Naive thymus-derived CD4-positive, alpha-beta T cell (primary cell): ENCODE measurements at regions of chr16 and their contacts with region 1.

Region 1: GRCh38 chr16:8868416-8869211 is at the start of gene CARHSP1:
- DNase-seq: peak; percentile 65 to 87 (median 74)
- ATAC-seq: peak; percentile 91
- H3K4me3 ChIP-seq: peak within 1 kb of the TSS; percentile 74
- H3K4me3 Mint-ChIP-seq: peak within 1 kb of the TSS; percentile 93 to 98 (median 96)
- H3K27ac ChIP-seq: peak within 1 kb of the TSS; percentile 67
- H3K27ac Mint-ChIP-seq: peak within 1 kb of the TSS; percentile 88 to 98 (median 95)
- H3K4me1 ChIP-seq: peaks cover 6 to 12% of the 10 kb centered on the region in 2 donors
- H3K4me1 Mint-ChIP-seq: peaks cover 30 to 63% (median 51%) of the 10 kb centered on the region in 7 donors
- H3K27me3 ChIP-seq: no peaks in the 10 kb centered on the region
- H3K27me3 Mint-ChIP-seq: no peaks in the 10 kb centered on the region
- total RNA-seq, gene CARHSP1: 29.6 to 123 (median 39.9) TPM

Region 2: DNA sequence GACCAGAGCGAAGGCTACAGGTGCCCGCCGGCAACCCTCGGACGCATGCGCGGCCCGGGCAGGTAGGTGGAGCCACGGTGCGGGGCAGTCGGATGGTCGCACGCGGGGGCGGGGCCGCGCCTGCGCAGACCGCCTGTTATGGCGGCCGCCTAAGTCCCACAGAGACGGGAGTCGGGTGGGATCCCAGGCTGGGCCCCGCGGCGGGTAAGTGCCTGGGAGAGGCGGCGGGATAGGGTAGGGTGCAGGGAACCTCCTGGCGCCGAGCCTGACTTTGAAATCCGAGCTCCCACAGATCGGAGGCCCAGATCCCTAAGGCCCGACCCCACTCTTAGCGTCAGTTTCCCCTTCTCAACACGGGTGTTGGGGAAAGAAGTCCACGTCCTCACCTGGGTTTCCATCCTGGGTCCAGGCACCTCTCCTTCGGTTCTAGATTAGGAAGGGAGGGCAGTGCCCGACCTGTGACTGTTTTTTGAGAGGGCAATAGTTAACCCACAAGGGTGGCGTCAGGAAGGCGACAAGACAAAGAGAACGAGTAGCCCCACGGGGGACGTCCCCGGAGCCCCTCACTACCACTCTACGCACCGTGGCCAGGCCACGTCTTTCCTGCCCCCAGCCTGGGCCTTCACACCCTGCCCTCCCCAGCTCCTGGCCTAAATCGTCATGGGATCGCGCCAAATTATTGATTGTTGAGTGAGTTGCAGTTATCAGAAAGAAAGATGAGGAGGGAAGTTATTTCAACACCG is 246.9 kb before region 1 on chr16 and contains the start of gene METTL22:
- CTCF ChIA-PET with region 1: no interaction called
- POLR2A ChIA-PET with region 1: no interaction called
- intact Hi-C with region 1: loop called (anchors 1 to 2 kb)
- DNase-seq: peak; percentile 83 to 98 (median 90)
- ATAC-seq: peak; percentile 99
- H3K4me3 ChIP-seq: peak within 1 kb of the TSS; percentile 97
- H3K4me3 Mint-ChIP-seq: peak within 1 kb of the TSS; percentile 93 to 100 (median 95)
- H3K27ac ChIP-seq: peak within 1 kb of the TSS; percentile 92
- H3K27ac Mint-ChIP-seq: peak within 1 kb of the TSS; percentile 75 to 93 (median 87)
- H3K4me1 ChIP-seq: peaks cover 7 to 10% of the 10 kb centered on the region in 2 donors
- H3K4me1 Mint-ChIP-seq: peaks cover 17 to 40% (median 26%) of the 10 kb centered on the region in 7 donors
- H3K27me3 ChIP-seq: no peaks in the 10 kb centered on the region
- H3K27me3 Mint-ChIP-seq: peaks cover 0 to 17% (median 6%) of the 10 kb centered on the region in 5 donors
- total RNA-seq, gene METTL22: 28.9 to 59.4 (median 48.9) TPM

Region 3: DNA sequence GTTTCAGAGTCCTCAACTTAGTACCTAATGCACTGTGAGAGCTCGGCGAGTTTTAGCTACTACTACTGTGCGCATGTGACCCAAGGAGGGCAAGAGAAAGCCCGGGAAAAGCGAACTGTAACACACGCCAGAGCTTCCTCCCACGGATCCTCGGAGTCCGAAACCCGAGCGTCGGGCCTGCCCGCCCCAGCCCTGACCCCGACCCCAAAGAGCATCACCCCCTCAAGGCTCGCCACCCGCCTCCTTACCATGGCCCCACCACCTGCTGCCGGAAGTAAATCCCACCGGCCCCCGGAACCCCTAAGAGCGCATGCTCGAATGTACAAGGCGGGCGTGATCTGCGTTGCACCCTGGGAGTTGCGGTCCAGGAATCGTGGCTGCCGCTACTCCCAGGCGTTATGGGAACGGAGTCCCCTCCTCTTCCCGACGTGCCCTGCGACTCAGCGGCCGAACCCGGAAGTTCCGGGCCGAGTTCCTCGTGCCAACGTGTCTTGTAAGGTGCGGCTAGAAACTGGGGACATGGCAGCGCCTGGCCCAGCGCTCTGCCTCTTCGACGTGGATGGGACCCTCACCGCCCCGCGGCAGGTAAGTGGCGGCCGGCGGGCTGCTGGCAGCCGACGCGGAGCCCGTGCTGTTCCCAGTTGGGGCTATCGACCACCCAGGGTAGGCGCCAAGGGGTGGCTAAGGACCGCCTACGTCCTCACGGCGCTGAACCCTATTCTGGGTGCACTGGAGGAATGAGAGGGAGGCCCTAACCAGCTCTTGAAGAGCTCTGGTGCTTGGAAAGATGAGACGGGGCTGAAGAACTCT is 71.0 kb before region 1 on chr16 and contains the starts of genes PMM2 and TMEM186:
- CTCF ChIA-PET with region 1: interaction called, 4 read pairs
- POLR2A ChIA-PET with region 1: interaction called, 22 read pairs
- intact Hi-C with region 1: loop called (anchors 1 kb)
- DNase-seq: peak; percentile 78 to 96 (median 93)
- ATAC-seq: peak; percentile 99
- H3K4me3 ChIP-seq: peak within 1 kb of the TSS; percentile 90
- H3K4me3 Mint-ChIP-seq: peak within 1 kb of the TSS; percentile 91 to 99 (median 96)
- H3K27ac ChIP-seq: peak within 1 kb of the TSS; percentile 86
- H3K27ac Mint-ChIP-seq: peak within 1 kb of the TSS; percentile 87 to 95 (median 92)
- H3K4me1 ChIP-seq: peaks cover 25 to 32% of the 10 kb centered on the region in 2 donors
- H3K4me1 Mint-ChIP-seq: peaks cover 19 to 71% (median 49%) of the 10 kb centered on the region in 7 donors
- H3K27me3 ChIP-seq: no peaks in the 10 kb centered on the region
- H3K27me3 Mint-ChIP-seq: no peaks in the 10 kb centered on the region
- total RNA-seq, gene PMM2: 32.2 to 52.8 (median 41.7) TPM
- total RNA-seq, gene TMEM186: 3.2 to 16.3 (median 11.3) TPM

Region 4: GRCh38 chr16:8850279-8850885 is 18.2 kb before region 1 on chr16:
- CTCF ChIA-PET with region 1: interaction called, 3 read pairs
- POLR2A ChIA-PET with region 1: interaction called, 15 read pairs
- intact Hi-C with region 1: loop called (anchors 2 kb)
- DNase-seq: no peak
- ATAC-seq: peak; percentile 78
- H3K4me3 ChIP-seq: no peak overlapping the region
- H3K4me3 Mint-ChIP-seq: peak overlapping the region in 3 of 10 donors; percentile 14 to 42 (median 41)
- H3K27ac ChIP-seq: peak overlapping the region; percentile 51
- H3K27ac Mint-ChIP-seq: peak overlapping the region; percentile 27 to 86 (median 72)
- H3K4me1 ChIP-seq: no peaks in the 10 kb centered on the region
- H3K4me1 Mint-ChIP-seq: peaks cover 10 to 29% (median 17%) of the 10 kb centered on the region in 7 donors
- H3K27me3 ChIP-seq: no peaks in the 10 kb centered on the region
- H3K27me3 Mint-ChIP-seq: no peaks in the 10 kb centered on the region

Region 5: GRCh38 chr16:8963825-8964441 is 95.3 kb after region 1 on chr16 and contains the start of gene USP7:
- CTCF ChIA-PET with region 1: no interaction called
- POLR2A ChIA-PET with region 1: no interaction called
- intact Hi-C with region 1: loop called (anchors 1 to 2 kb)
- DNase-seq: peak; percentile 86 to 94 (median 92)
- ATAC-seq: peak; percentile 94
- H3K4me3 ChIP-seq: peak within 1 kb of the TSS; percentile 77
- H3K4me3 Mint-ChIP-seq: peak within 1 kb of the TSS; percentile 90 to 98 (median 95)
- H3K27ac ChIP-seq: peak within 1 kb of the TSS; percentile 85
- H3K27ac Mint-ChIP-seq: peak within 1 kb of the TSS; percentile 80 to 97 (median 92)
- H3K4me1 ChIP-seq: peaks cover 30 to 34% of the 10 kb centered on the region in 2 donors
- H3K4me1 Mint-ChIP-seq: peaks cover 35 to 42% (median 40%) of the 10 kb centered on the region in 7 donors
- H3K27me3 ChIP-seq: no peaks in the 10 kb centered on the region
- H3K27me3 Mint-ChIP-seq: peaks cover 0 to 18% (median 0%) of the 10 kb centered on the region in 5 donors
- total RNA-seq, gene USP7: 175 to 261 (median 178) TPM